ENCODE measurements at regions of chr15 and their contacts with region 1.

Region 1: GRCh38 chr15:83248151-83249029 is 36.1 kb downstream of the BNC1 start:
- DNase-seq: no peak
- ATAC-seq: peak; percentile 45 to 57
- H3K4me3 ChIP-seq: no peak overlapping the region
- H3K27ac ChIP-seq: no peak overlapping the region
- H3K4me1 ChIP-seq: no peaks in the 10 kb centered on the region
- H3K27me3 ChIP-seq: no peaks in the 10 kb centered on the region

Region 2: GRCh38 chr15:82832601-82833361 is 415.6 kb before region 1 on chr15:
- intact Hi-C with region 1: no loop called
- DNase-seq: no peak
- ATAC-seq: peak in 1 of 2 donors; percentile 48
- H3K4me3 ChIP-seq: no peak overlapping the region
- H3K27ac ChIP-seq: no peak overlapping the region
- H3K4me1 ChIP-seq: no peaks in the 10 kb centered on the region
- H3K27me3 ChIP-seq: no peaks in the 10 kb centered on the region

Region 3: GRCh38 chr15:83372420-83372891 is 124.1 kb after region 1 on chr15:
- intact Hi-C with region 1: loop called in 2 of 4 experiments (anchors 5 to 10 kb)
- DNase-seq: no peak
- ATAC-seq: peak in 1 of 2 donors; percentile 37
- H3K4me3 ChIP-seq: no peak overlapping the region
- H3K27ac ChIP-seq: no peak overlapping the region
- H3K4me1 ChIP-seq: no peaks in the 10 kb centered on the region
- H3K27me3 ChIP-seq: peaks cover 5% of the 10 kb centered on the region

Region 4: DNA sequence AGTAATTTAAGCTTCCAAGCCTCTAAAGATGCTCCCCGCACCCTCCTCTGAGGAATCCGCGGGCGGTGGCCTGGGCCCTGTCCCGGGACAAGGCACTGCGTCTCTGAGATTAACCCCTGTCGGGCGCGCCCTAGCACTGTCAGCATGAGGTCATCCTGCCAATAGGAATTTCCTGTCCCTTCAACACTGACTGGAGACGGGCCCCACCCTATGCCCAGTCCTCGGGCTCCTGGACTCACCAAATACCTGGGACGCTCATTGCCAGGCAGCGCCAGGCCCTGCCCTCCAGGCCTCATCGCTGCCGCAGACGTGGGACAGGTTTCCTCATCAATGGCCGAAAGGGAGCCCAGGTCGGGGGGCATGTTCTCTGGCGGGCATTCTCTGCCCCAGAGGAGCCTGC is 131.2 kb after region 1 on chr15:
- intact Hi-C with region 1: loop called in 2 of 4 experiments (anchors 5 to 10 kb)
- DNase-seq: no peak
- ATAC-seq: peak; percentile 14 to 48
- H3K4me3 ChIP-seq: no peak overlapping the region
- H3K27ac ChIP-seq: no peak overlapping the region
- H3K4me1 ChIP-seq: no peaks in the 10 kb centered on the region
- H3K27me3 ChIP-seq: no peaks in the 10 kb centered on the region

Region 5: GRCh38 chr15:83430441-83430840 is 182.1 kb after region 1 on chr15:
- intact Hi-C with region 1: loop called (anchors 5 kb)
- DNase-seq: no peak
- ATAC-seq: no peak
- H3K4me3 ChIP-seq: no peak overlapping the region
- H3K27ac ChIP-seq: no peak overlapping the region
- H3K4me1 ChIP-seq: no peaks in the 10 kb centered on the region
- H3K27me3 ChIP-seq: no peaks in the 10 kb centered on the region

Region 6: DNA sequence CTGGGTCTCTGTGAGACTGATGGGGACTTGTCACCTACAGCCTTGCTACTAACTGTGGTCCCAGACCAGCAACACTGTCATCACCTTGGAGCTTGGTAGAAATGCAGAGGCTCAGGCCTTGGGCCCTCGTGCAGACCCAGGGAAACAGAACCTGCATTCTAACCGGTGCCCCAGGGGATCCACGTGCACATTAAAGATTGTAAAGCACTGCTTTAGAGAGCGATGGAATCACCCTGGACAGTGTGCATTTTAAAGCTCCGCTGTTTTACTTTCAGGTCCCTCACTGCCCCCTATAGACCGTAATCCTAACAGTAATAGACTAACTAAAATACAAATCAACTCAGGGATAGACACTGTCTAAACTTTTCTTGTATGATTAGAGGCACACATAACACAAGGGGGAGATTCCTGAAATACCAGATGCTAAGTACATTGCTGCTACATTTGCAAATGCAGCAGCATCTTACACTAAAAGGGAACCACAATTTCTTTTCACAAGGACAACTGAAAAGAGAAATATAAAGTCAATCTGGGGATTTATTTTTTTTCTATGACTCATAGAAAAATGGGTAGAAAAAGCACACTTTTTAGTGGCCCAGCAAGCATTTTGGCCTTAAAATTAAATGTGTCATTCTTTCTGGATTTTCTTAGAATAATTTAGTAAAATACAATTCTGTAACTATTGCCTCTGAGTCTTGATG is 188.2 kb after region 1 on chr15:
- intact Hi-C with region 1: loop called (anchors 5 kb)
- DNase-seq: no peak
- ATAC-seq: peak in 1 of 2 donors; percentile 53
- H3K4me3 ChIP-seq: no peak overlapping the region
- H3K27ac ChIP-seq: no peak overlapping the region
- H3K4me1 ChIP-seq: no peaks in the 10 kb centered on the region
- H3K27me3 ChIP-seq: no peaks in the 10 kb centered on the region

Region 7: DNA sequence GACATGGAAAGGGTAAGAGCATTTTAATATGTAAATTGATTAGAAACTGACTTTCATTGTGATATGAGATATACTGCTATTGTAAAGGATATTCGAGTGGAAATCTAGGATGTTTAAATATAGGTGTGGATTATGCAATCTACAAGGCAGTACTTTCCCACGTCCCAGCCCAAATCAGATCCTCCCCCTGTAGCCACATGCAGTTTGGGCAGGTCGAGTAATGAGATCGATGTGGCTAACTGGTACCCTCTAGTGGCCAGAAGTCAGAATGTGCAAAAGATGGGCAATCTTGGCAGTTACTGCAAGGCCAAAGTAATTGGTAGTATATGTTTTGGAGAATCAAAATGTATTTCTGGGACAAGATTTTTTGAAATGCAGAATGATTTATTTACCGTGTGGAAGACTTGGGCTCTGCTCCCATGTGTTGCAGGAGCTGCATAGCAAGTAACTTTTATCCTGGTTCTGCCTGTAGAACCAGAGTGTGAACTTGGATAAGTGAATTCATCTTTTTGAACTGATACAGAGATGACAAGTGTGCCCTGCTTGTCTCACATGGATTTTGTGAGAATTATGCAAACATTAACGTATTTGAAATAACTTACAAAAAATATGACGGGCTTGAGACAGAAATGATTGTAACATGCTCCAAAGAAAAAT is 311.0 kb after region 1 on chr15:
- intact Hi-C with region 1: loop called (anchors 5 to 10 kb)
- DNase-seq: peak; percentile 35 to 54 (median 52)
- ATAC-seq: peak; percentile 79 to 83
- H3K4me3 ChIP-seq: no peak overlapping the region
- H3K27ac ChIP-seq: no peak overlapping the region
- H3K4me1 ChIP-seq: no peaks in the 10 kb centered on the region
- H3K27me3 ChIP-seq: no peaks in the 10 kb centered on the region

Region 8: GRCh38 chr15:84023636-84024035 is 775.2 kb after region 1 on chr15:
- intact Hi-C with region 1: loop called in 1 of 4 experiments (anchors 10 kb)
- DNase-seq: peak in 2 of 3 donors; percentile 28 to 50
- ATAC-seq: no peak
- H3K4me3 ChIP-seq: no peak overlapping the region
- H3K27ac ChIP-seq: no peak overlapping the region
- H3K4me1 ChIP-seq: no peaks in the 10 kb centered on the region
- H3K27me3 ChIP-seq: no peaks in the 10 kb centered on the region

Measured in right cardiac atrium (tissue), 5 donors.